Tibial artery (tissue), 4 donors: ENCODE measurements at regions of chr12 and their contacts with region 1.

Region 1: GRCh38 chr12:50924439-50925341 is 27.7 kb upstream of the HIGD1C start:
- DNase-seq: peak; percentile 96 to 98
- H3K4me3 ChIP-seq: peak overlapping the region; percentile 63 to 76
- H3K27ac ChIP-seq: peak overlapping the region; percentile 81 to 84
- H3K4me1 ChIP-seq: peaks cover 0 to 46% (median 26%) of the 10 kb centered on the region in 4 donors
- H3K27me3 ChIP-seq: no peaks in the 10 kb centered on the region
- CTCF ChIP-seq: no peak

Region 2: GRCh38 chr12:50763639-50764285 is 160.9 kb before region 1 on chr12 and contains the start of gene ATF1:
- intact Hi-C with region 1: loop called (anchors 5 kb)
- DNase-seq: peak; percentile 90 to 94
- H3K4me3 ChIP-seq: peak within 1 kb of the TSS; percentile 82 to 98
- H3K27ac ChIP-seq: peak within 1 kb of the TSS; percentile 92 to 98
- H3K4me1 ChIP-seq: peaks cover 0 to 42% (median 24%) of the 10 kb centered on the region in 4 donors
- H3K27me3 ChIP-seq: no peaks in the 10 kb centered on the region
- CTCF ChIP-seq: peak in 1 of 2 experiments; percentile 19

Region 3: GRCh38 chr12:50960130-50960529 is 35.4 kb after region 1 on chr12:
- intact Hi-C with region 1: no loop called
- DNase-seq: no peak
- H3K4me3 ChIP-seq: no peak overlapping the region
- H3K27ac ChIP-seq: no peak overlapping the region
- H3K4me1 ChIP-seq: no peaks in the 10 kb centered on the region
- H3K27me3 ChIP-seq: no peaks in the 10 kb centered on the region
- CTCF ChIP-seq: no peak

Region 4: DNA sequence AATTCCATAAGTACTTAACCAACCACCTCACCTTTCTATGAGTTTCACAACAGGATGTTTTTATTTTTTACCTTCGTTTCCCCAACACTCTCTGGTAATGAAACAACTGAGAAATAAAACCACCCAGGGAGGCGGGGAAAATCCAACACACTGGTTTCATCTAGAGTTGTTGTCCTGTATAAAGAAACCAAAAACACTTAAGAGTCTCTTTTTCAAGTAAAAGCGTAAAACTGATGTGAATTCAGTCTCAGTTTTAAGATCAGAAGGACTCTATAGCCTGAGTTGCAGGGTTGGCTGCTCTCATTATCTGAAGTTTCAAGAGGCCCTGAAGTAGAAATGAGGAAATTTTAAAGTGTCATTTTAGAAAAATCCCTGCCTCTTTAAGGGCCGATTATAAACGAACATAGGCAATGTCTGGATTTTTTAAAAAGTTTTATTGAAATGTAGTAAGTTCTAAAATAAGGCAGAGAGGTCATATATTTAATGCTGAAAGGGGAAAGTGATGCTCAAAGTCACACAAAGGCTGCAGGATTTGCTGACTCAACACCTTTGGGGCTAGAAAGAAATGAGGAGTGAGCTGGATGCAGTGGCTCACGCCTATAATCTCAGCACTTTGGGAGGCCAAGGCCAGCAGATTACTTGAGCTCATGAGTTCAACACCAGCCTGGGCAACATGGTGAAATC is 54.8 kb after region 1 on chr12:
- intact Hi-C with region 1: loop called (anchors 5 kb)
- DNase-seq: no peak
- H3K4me3 ChIP-seq: no peak overlapping the region
- H3K27ac ChIP-seq: no peak overlapping the region
- H3K4me1 ChIP-seq: peaks cover 0 to 20% (median 12%) of the 10 kb centered on the region in 4 donors
- H3K27me3 ChIP-seq: no peaks in the 10 kb centered on the region
- CTCF ChIP-seq: no peak

Region 5: GRCh38 chr12:51773145-51773867 is 848.6 kb after region 1 on chr12:
- intact Hi-C with region 1: no loop called
- DNase-seq: no peak
- H3K4me3 ChIP-seq: no peak overlapping the region
- H3K27ac ChIP-seq: no peak overlapping the region
- H3K4me1 ChIP-seq: no peaks in the 10 kb centered on the region
- H3K27me3 ChIP-seq: no peaks in the 10 kb centered on the region
- CTCF ChIP-seq: no peak